Panc1 (cell line): ENCODE measurements at regions of chr3 and their contacts with region 1.

Region 1: DNA sequence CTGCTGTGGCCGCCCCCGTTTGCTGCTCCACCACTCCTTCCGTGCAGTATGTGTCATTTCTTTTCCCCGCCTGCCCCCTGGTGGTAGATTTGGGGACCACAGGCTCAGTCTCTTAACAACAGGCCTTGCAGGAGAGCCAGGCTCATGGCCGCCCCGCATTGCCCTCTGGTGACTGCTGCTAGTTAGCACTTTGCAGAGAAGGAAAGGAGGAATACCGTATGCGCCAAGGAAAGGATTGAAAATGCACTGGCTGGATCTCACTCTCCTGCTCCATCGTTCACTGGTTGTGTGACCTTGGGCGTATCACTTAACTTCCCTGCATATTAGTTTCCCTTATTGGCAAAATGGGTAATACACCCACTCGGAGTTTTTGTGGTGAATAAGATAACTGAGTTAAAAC is 39.3 kb upstream of the PXYLP1 start:
- DNase-seq: peak; percentile 82
- ATAC-seq: peak; percentile 100
- H3K4me3 ChIP-seq: no peak overlapping the region
- H3K27ac ChIP-seq: no peak overlapping the region
- H3K4me1 ChIP-seq: no peaks in the 10 kb centered on the region
- H3K27me3 ChIP-seq: peaks cover 23% of the 10 kb centered on the region
- CTCF ChIP-seq: peak; percentile 100

Region 2: DNA sequence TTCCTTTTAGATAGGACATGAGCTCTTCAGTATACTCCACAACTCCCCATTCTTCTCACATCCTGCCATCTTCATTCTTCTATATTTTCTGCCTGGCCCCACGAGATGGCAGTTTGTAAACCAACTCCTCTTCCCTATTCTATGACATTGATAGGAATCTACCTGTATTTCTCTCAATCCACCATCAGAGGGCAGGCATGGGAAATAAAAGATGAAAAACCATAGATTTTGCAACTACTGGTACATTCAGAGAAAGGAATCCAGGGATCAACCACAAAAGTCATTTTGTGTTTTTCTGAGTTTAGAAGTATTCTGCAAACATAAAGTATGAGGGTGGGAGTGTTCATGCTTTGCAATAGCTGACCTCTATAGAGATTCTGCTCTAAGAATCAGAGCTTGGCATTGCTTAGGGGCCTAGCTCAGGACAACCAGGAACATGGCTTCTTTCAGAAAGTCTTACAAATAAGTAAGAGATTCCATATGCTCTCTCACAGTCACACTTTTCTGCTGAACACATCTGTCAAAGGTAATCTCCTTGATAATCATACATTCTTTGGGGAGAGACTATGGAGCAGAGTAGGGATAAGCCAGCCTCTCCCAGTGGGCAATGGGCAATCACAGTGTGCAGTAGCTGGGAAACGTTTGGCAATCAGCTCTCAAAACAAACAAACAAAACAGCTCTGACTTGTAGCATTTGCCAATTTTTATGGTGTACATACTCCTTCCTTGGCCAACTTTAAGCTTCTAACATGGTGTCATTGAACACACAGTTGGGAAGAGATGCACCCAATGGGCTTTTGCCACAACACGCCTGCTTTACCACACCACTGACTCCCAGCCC is 293.8 kb before region 1 on chr3:
- CTCF ChIA-PET with region 1: interaction called, 3 read pairs
- POLR2A ChIA-PET with region 1: no interaction called
- in situ Hi-C with region 1: no loop called
- intact Hi-C with region 1: loop called (anchors 1 kb)
- DNase-seq: peak; percentile 28
- ATAC-seq: peak; percentile 80
- H3K4me3 ChIP-seq: no peak overlapping the region
- H3K27ac ChIP-seq: no peak overlapping the region
- H3K4me1 ChIP-seq: no peaks in the 10 kb centered on the region
- H3K27me3 ChIP-seq: peaks cover 5% of the 10 kb centered on the region
- CTCF ChIP-seq: peak; percentile 70

Region 3: GRCh38 chr3:141000027-141000663 is 192.2 kb before region 1 on chr3:
- CTCF ChIA-PET with region 1: interaction called, 6 read pairs
- POLR2A ChIA-PET with region 1: no interaction called
- in situ Hi-C with region 1: no loop called
- intact Hi-C with region 1: loop called (anchors 1 kb)
- DNase-seq: peak; percentile 41
- ATAC-seq: peak; percentile 99
- H3K4me3 ChIP-seq: no peak overlapping the region
- H3K27ac ChIP-seq: no peak overlapping the region
- H3K4me1 ChIP-seq: no peaks in the 10 kb centered on the region
- H3K27me3 ChIP-seq: no peaks in the 10 kb centered on the region; the same call in 1 of the 2 replicates
- CTCF ChIP-seq: peak; percentile 88

Region 4: GRCh38 chr3:141011232-141011996 is 180.9 kb before region 1 on chr3:
- CTCF ChIA-PET with region 1: interaction called, 5 read pairs
- POLR2A ChIA-PET with region 1: no interaction called
- in situ Hi-C with region 1: no loop called
- intact Hi-C with region 1: loop called (anchors 1 kb)
- DNase-seq: peak; percentile 36
- ATAC-seq: peak; percentile 95
- H3K4me3 ChIP-seq: no peak overlapping the region
- H3K27ac ChIP-seq: no peak overlapping the region
- H3K4me1 ChIP-seq: no peaks in the 10 kb centered on the region
- H3K27me3 ChIP-seq: peaks cover 15% of the 10 kb centered on the region
- CTCF ChIP-seq: peak; percentile 94

Region 5: DNA sequence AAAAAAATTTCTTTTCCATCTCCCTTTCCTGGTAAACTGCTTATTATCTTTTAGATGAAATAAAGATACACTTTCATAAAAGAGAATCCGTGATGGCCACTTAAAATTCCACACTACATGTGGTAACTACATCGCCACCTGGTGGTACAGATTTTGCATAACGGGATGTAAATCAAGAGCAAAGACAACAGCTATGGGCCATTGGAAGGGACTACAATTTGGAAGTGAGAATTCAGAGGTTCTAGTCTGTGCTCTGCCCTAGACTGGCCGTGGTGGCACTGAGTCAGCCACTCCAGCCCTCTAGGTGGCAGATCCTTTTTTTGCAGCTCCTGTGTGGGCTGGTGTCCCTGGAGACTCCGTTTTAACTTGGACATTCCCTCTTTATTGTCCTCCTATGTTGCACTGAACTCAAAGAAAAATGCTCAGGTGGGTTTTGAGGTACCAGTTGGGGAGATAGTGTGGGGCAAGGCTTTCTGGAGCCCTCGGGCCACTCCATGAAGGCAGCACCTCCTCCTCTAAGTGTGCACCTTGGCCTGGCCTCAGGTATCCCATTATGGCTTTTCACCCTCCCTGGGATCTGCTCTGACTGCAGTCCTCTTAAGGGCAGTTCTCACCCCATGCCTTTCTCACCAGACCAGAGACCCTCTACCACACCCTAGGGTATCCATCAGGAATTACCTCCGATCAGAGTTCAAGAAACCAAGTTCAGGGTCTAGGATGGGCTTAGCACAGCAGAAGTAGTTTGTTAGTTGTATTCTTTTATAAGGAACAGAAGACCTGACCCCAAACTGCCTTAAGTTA is 86.3 kb before region 1 on chr3:
- CTCF ChIA-PET with region 1: no interaction called
- POLR2A ChIA-PET with region 1: no interaction called
- in situ Hi-C with region 1: no loop called
- intact Hi-C with region 1: loop called (anchors 2 kb)
- DNase-seq: peak; percentile 67
- ATAC-seq: peak; percentile 80
- H3K4me3 ChIP-seq: no peak overlapping the region
- H3K27ac ChIP-seq: no peak overlapping the region
- H3K4me1 ChIP-seq: no peaks in the 10 kb centered on the region
- H3K27me3 ChIP-seq: no peaks in the 10 kb centered on the region
- CTCF ChIP-seq: peak; percentile 85

Region 6: GRCh38 chr3:141227752-141228151 is 35.4 kb after region 1 on chr3:
- CTCF ChIA-PET with region 1: no interaction called
- POLR2A ChIA-PET with region 1: no interaction called
- in situ Hi-C with region 1: no loop called
- intact Hi-C with region 1: no loop called
- DNase-seq: no peak
- ATAC-seq: no peak
- H3K4me3 ChIP-seq: no peak overlapping the region
- H3K27ac ChIP-seq: no peak overlapping the region
- H3K4me1 ChIP-seq: peaks cover 6% of the 10 kb centered on the region; the same call in 1 of the 2 replicates
- H3K27me3 ChIP-seq: no peaks in the 10 kb centered on the region
- CTCF ChIP-seq: no peak